Heart left ventricle (tissue), 16 donors: ENCODE measurements at regions of chr12 and their contacts with region 1.

Region 1: GRCh38 chr12:31249356-31249755 is 76.6 kb downstream of the SINHCAF start:
- DNase-seq: no peak
- ATAC-seq: no peak
- H3K4me3 ChIP-seq: no peak overlapping the region
- H3K27ac ChIP-seq: no peak overlapping the region
- H3K4me1 ChIP-seq: no peaks in the 10 kb centered on the region
- H3K27me3 ChIP-seq: peaks cover 0 to 4% (median 0%) of the 10 kb centered on the region in 9 donors
- CTCF ChIP-seq: no peak
- POLR2A ChIP-seq: no peak

Region 2: DNA sequence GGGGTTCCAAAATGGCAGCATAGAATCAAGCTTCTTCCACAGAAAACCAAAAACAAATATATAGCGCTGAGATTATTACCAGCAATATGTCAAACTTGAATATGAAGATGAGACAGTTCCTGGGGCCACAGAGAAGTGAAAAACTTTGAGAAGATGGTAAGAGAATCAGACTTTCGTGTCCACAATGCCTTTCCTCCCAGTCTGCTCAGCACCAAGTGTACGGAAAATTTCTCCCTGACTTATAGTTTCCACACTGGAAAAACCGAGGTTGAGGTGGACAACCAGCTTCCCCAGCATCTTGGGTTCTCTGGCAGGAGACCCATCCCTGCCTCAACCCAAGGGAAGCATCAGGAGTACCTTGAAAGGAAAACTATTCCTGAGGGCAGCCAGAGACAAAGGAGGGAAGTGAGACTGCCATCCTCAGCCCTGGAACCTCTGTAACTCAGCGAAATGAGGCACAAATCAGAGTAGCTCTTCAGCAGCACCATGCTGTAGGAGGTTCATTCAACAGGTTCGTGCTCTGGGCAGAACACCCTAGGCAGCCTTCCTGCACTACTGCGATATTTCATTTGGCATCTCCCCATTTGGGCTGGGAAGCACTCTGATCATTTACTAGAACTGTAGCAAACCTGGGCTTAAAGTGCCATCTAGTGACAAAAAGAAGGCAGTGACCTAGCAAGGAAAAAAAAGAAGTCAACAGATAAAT is 442.2 kb before region 1 on chr12:
- intact Hi-C with region 1: no loop called
- DNase-seq: peak in 2 of 5 donors; percentile 37 to 46
- ATAC-seq: peak; percentile 80 to 92 (median 88)
- H3K4me3 ChIP-seq: no peak overlapping the region
- H3K27ac ChIP-seq: no peak overlapping the region
- H3K4me1 ChIP-seq: peaks cover 0 to 4% (median 1%) of the 10 kb centered on the region in 12 donors
- H3K27me3 ChIP-seq: no peaks in the 10 kb centered on the region
- CTCF ChIP-seq: peak; percentile 61 to 86 (median 79)
- POLR2A ChIP-seq: no peak

Region 3: GRCh38 chr12:31274520-31275300 is 25.4 kb after region 1 on chr12:
- intact Hi-C with region 1: loop called in 1 of 10 experiments (anchors 2 kb)
- DNase-seq: no peak
- ATAC-seq: no peak
- H3K4me3 ChIP-seq: no peak overlapping the region
- H3K27ac ChIP-seq: no peak overlapping the region
- H3K4me1 ChIP-seq: no peaks in the 10 kb centered on the region
- H3K27me3 ChIP-seq: no peaks in the 10 kb centered on the region
- CTCF ChIP-seq: no peak
- POLR2A ChIP-seq: no peak

Region 4: GRCh38 chr12:31387466-31387865 is 138.1 kb after region 1 on chr12:
- intact Hi-C with region 1: no loop called
- DNase-seq: no peak
- ATAC-seq: peak in 1 of 4 donors; percentile 45
- H3K4me3 ChIP-seq: no peak overlapping the region
- H3K27ac ChIP-seq: no peak overlapping the region
- H3K4me1 ChIP-seq: no peaks in the 10 kb centered on the region
- H3K27me3 ChIP-seq: no peaks in the 10 kb centered on the region
- CTCF ChIP-seq: no peak
- POLR2A ChIP-seq: no peak